CD8-positive, alpha-beta memory T cell (primary cell): ENCODE measurements at regions of chr13 and their contacts with region 1.

Region 1: GRCh38 chr13:28658796-28659620 is at the start of gene POMP:
- DNase-seq: peak; percentile 89 to 95 (median 90)
- H3K4me3 ChIP-seq: peak within 1 kb of the TSS; percentile 71
- H3K4me3 Mint-ChIP-seq: peak within 1 kb of the TSS; percentile 97 to 99 (median 98)
- H3K27ac ChIP-seq: peak within 1 kb of the TSS; percentile 95
- H3K27ac Mint-ChIP-seq: peak within 1 kb of the TSS; percentile 95 to 100 (median 99)
- H3K4me1 ChIP-seq: peaks cover 25% of the 10 kb centered on the region
- H3K4me1 Mint-ChIP-seq: peaks cover 54 to 79% (median 68%) of the 10 kb centered on the region in 3 donors
- H3K27me3 ChIP-seq: no peaks in the 10 kb centered on the region
- H3K27me3 Mint-ChIP-seq: peaks cover 0 to 6% of the 10 kb centered on the region in 2 donors
- total RNA-seq, gene POMP: 127 to 131 TPM

Region 2: GRCh38 chr13:28684257-28684656 is 25.2 kb after region 1 on chr13:
- CTCF ChIA-PET with region 1: no interaction called
- POLR2A ChIA-PET with region 1: no interaction called
- DNase-seq: no peak
- H3K4me3 ChIP-seq: no peak overlapping the region
- H3K4me3 Mint-ChIP-seq: no peak overlapping the region
- H3K27ac ChIP-seq: no peak overlapping the region
- H3K27ac Mint-ChIP-seq: no peak overlapping the region
- H3K4me1 ChIP-seq: no peaks in the 10 kb centered on the region
- H3K4me1 Mint-ChIP-seq: no peaks in the 10 kb centered on the region
- H3K27me3 ChIP-seq: no peaks in the 10 kb centered on the region
- H3K27me3 Mint-ChIP-seq: no peaks in the 10 kb centered on the region

Region 3: DNA sequence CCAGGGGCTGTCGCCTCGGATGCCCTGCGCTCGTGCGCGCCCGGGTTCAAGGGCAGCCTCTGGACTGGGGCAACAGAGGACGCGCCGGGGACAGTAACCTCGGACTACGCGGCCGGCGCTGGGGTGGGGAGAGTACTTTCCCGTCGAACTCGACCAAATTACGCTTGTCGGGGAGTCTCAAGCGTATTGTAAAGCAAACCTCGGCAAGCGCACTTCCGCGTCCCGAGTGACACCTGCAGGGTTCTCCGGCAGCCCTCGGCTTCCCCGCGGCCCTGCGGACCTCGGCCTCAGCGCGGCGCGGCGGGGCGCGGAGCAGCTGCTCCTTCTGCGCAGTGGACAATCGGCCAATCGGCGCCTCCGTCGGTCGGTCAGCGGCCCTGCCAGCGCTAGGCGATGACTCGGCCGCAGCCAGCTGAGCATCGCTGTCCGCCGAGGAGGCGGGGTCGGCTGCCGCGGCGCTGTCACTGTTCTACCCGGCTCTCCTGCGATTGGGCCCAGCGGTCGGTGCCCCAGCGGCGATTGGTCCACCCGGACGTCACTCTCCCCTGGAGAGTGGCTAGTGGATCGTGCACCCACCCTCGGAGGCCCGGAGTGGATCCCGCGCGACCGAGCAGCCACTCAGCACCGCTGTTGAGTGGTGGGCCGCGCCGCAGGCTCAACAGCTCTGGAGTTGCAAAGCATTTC is 59.7 kb after region 1 on chr13 and contains the start of gene SLC46A3:
- CTCF ChIA-PET with region 1: interaction called, 3 read pairs
- POLR2A ChIA-PET with region 1: interaction called, 11 read pairs
- DNase-seq: peak; percentile 94 to 98 (median 95)
- H3K4me3 ChIP-seq: peak within 1 kb of the TSS; percentile 69
- H3K4me3 Mint-ChIP-seq: peak within 1 kb of the TSS; percentile 89 to 98 (median 95)
- H3K27ac ChIP-seq: peak within 1 kb of the TSS; percentile 72
- H3K27ac Mint-ChIP-seq: peak within 1 kb of the TSS; percentile 89 to 98 (median 95)
- H3K4me1 ChIP-seq: peaks cover 25% of the 10 kb centered on the region
- H3K4me1 Mint-ChIP-seq: peaks cover 36 to 44% (median 38%) of the 10 kb centered on the region in 3 donors
- H3K27me3 ChIP-seq: no peaks in the 10 kb centered on the region
- H3K27me3 Mint-ChIP-seq: peaks cover 0 to 3% of the 10 kb centered on the region in 2 donors
- total RNA-seq, gene SLC46A3: 4.9 to 5.1 TPM